Activated CD4-positive, alpha-beta T cell treated with anti-CD3 and anti-CD28 coated beads, Interleukin-2, amount 10 ng/mL, durations not matched to agents 24 days and 14 days (primary cell): ENCODE measurements at regions of chr3 and their contacts with region 1.

Region 1: GRCh38 chr3:56915966-56916586 is 114.3 kb upstream of the ARHGEF3 start:
- DNase-seq: peak; percentile 93
- H3K4me3 Mint-ChIP-seq: peak overlapping the region; percentile 89
- H3K27ac Mint-ChIP-seq: peak overlapping the region; percentile 90
- H3K4me1 Mint-ChIP-seq: peaks cover 66% of the 10 kb centered on the region
- H3K27me3 Mint-ChIP-seq: no peaks in the 10 kb centered on the region

Region 2: GRCh38 chr3:56702490-56703315 is 213.4 kb before region 1 on chr3:
- intact Hi-C with region 1: loop called (anchors 2 kb)
- DNase-seq: peak; percentile 87
- H3K4me3 Mint-ChIP-seq: no peak overlapping the region
- H3K27ac Mint-ChIP-seq: no peak overlapping the region
- H3K4me1 Mint-ChIP-seq: peaks cover 27% of the 10 kb centered on the region
- H3K27me3 Mint-ChIP-seq: no peaks in the 10 kb centered on the region

Region 3: DNA sequence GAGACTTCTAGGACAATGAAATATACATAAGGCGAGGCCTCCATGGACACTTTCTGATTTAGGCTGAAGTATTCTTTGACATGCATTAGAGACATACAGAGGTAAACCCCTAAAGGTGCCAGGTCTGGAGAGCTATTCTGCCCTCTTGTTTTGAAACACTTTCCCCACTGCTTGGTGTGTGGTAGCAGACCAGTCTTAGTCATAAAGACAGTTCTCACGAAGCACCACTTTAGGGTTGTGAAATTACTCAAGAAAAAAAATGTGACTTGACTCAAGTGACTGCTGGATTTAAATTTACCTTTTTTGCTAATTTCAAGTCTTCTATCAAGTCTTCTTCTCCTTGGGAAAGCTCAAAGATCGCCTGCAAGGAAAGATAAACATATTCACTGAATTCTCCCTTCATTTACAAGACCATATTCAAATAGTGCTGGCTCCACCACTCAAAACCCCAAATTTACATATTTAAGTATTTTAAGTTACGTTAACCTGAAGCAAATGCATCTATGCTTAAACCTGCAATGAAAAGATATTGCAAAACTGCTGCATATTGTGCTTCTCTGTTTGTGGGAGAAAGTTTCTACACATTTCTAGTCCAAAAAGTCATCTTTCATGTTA is 162.8 kb before region 1 on chr3:
- intact Hi-C with region 1: loop called (anchors 1 kb)
- DNase-seq: peak; percentile 82
- H3K4me3 Mint-ChIP-seq: peak overlapping the region; percentile 67
- H3K27ac Mint-ChIP-seq: peak overlapping the region; percentile 80
- H3K4me1 Mint-ChIP-seq: peaks cover 62% of the 10 kb centered on the region
- H3K27me3 Mint-ChIP-seq: no peaks in the 10 kb centered on the region

Region 4: DNA sequence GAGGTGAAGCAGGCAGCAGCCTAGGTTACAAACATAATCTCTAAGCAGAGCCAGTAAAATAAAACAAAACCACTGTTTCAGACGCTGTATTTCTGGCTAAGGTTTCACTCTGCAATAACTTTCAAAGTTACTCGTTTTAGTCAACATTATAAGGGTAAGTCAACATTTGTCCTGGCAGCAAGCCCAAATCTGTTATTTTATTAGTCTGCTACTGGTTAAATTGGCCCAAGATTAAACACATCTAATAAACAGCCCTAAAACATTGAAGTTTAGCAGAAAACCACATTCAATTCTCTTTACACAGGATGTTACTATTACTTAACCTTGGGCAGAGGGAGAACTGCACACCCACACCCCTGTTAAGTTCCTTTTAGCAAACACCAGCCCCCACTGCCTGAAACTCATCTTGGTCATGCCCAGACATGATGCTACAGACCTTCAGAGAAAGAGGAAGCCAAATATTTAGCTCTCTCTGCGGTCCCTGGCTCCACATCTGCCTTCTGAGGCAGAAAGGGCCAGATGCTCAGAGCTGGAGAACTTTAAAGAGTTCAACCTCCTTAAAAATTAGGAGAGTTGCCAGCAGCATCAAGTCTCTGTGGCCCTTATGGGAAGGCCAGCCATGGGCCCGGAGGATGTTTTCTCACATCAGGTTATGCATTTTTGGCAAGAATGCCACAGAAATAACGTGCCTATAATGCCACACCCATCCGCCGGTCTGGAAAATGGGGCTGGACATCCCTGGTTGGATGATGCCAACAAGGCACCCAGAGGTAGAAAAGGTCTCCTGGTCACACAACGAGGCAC is 132.2 kb before region 1 on chr3:
- intact Hi-C with region 1: loop called (anchors 2 kb)
- DNase-seq: peak; percentile 92
- H3K4me3 Mint-ChIP-seq: peak overlapping the region; percentile 75
- H3K27ac Mint-ChIP-seq: peak overlapping the region; percentile 95
- H3K4me1 Mint-ChIP-seq: peaks cover 87% of the 10 kb centered on the region
- H3K27me3 Mint-ChIP-seq: no peaks in the 10 kb centered on the region

Region 5: GRCh38 chr3:56855856-56856512 is 60.1 kb before region 1 on chr3:
- intact Hi-C with region 1: no loop called
- DNase-seq: peak; percentile 76
- H3K4me3 Mint-ChIP-seq: no peak overlapping the region
- H3K27ac Mint-ChIP-seq: peak overlapping the region; percentile 65
- H3K4me1 Mint-ChIP-seq: peaks cover 51% of the 10 kb centered on the region
- H3K27me3 Mint-ChIP-seq: no peaks in the 10 kb centered on the region

Region 6: DNA sequence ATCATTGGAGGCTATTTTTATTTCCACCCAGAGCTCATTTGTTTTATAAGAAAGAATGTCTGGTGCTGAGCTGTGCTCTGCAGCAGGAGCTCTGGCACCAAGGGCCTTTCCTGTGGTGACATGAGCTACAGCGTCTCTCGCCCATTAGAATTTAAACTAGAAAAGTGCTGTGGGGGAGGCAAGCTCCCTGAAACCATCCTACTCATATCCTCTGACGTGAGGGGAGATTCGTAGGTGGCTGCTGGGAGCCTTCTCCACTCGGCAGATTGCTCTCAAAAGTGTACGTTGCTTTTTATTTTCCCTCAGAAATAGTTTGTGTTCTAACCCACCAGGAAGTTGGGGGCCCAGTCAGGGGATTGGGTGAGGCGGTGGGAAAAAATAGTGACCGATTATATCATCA is 38.0 kb before region 1 on chr3:
- intact Hi-C with region 1: loop called (anchors 1 kb)
- DNase-seq: peak; percentile 80
- H3K4me3 Mint-ChIP-seq: peak overlapping the region; percentile 76
- H3K27ac Mint-ChIP-seq: peak overlapping the region; percentile 96
- H3K4me1 Mint-ChIP-seq: peaks cover 78% of the 10 kb centered on the region
- H3K27me3 Mint-ChIP-seq: no peaks in the 10 kb centered on the region

Region 7: DNA sequence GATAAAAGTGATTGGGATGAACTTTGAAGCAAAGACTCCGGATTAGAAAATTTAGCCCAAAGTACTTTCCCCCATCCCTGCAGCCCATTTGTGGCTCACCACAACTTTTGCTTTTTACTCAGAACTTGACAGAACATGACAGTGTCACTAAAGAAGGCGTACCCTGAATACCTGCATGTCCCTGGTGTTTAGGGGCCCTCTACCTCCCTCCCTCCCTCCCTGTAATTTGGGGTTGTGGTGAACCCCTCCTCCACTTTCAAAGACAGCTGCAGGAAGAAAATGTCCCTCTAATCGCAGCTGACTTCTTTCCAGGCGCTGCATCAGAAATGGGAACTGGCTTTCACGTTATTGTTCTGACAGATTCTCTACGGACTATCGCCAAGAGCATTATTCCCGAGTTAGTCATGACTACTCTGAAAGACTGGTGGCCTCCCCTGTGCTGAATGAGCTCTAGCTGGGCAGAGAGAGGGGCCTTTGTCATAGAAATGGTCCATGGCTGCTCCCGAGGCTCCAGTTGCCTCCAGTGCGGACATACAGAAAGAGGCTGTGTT is 21.1 kb before region 1 on chr3:
- intact Hi-C with region 1: loop called (anchors 1 kb)
- DNase-seq: peak; percentile 70
- H3K4me3 Mint-ChIP-seq: no peak overlapping the region
- H3K27ac Mint-ChIP-seq: peak overlapping the region; percentile 45
- H3K4me1 Mint-ChIP-seq: peaks cover 43% of the 10 kb centered on the region
- H3K27me3 Mint-ChIP-seq: no peaks in the 10 kb centered on the region

Region 8: DNA sequence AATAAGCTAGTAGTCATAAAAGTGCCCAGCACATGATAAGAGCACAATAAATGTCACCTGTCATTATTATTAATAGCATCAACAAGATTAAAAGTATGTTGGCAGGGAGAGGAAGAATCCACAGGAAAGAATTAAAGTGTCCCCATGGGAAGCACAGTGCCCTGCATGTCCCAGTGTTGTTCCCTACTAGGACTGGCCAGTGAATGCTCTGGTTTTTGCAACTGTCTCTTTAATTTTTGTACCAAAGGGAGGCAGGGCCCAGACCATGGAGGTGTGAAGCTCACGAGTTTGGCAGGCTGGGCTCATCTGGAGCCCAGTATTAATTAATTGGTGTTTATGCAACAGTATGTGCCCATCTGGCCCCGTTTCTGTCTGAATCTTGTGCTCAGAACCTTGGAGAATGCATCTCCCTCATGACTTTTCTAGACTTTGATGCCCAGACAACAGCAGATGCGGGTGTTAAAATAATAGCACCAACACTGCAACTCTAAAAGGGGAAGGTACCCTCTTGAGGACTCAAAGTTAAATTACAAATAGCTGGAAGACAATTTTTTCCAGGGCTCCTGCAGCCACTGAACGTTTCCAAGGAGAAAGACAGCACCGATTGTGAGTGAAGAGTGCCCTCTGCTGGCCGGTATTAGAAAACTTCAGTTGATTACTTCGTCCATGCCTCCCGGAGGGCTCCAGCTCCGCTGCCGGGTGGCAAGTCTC is 72.5 kb after region 1 on chr3:
- intact Hi-C with region 1: no loop called
- DNase-seq: peak; percentile 91
- H3K4me3 Mint-ChIP-seq: no peak overlapping the region
- H3K27ac Mint-ChIP-seq: no peak overlapping the region
- H3K4me1 Mint-ChIP-seq: peaks cover 30% of the 10 kb centered on the region
- H3K27me3 Mint-ChIP-seq: peaks cover 26% of the 10 kb centered on the region